ENCODE measurements at regions of chr12 and their contacts with region 1.

Region 1: DNA sequence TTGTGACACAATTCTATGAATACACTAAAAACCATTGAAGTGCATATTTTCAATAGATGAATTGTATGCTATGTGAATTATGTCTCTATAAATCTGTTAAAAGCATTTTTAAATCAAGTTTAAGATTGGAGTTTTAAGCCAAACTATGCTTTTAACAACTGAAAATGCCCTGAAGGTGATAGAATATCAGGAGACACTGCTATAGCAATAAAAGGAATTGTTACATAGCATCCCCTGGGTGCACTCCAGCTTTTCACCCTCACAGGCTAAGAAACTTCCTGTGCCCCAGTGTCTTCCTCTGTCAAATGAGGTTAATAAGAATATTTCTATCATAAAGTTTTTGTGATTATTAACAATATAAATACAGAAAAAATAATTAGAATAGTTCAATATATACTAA is 472.7 kb upstream of the TMPO start:
- DNase-seq: no peak

Region 2: DNA sequence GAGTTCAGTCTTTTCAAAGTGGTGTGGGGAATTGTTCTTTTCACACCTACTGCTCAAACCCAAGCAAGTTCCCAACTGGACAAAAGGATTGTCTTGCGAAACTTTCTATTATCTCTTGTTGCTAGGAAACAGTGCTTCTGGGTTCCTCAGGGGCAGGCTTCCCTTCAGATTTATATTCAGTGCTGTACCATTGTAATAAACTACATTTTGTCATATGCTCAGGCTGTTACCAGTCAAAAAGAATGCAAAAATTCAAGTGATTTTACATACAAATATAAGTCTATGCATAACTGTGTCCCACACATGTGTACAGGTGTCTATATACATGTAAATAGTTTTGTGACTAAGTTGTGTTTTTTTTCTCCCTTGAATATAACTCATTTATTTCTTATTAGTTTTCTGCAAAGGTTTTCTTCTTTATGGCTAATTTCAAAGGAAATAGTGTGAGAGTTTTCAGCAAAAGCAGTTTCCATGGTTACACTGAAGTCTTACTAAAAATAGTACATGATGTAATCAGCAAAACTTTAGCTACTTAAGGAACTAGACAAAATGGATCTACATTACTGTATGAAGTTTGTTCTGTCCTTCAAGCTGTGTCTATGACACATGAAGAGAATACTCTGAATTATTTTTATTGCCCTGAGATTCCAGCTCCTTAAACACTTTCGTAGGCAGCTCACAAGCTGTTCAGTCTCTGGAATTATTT is 42.5 kb after region 1 on chr12:
- intact Hi-C with region 1: loop called in 1 of 2 experiments (anchors 2 kb)
- DNase-seq: no peak